Activated CD8-positive, alpha-beta T cell treated with anti-CD3 and anti-CD28 coated beads, Interleukin-2, amount 10 ng/mL, durations not matched to agents 7 days and 5 days (primary cell): ENCODE measurements at regions of chr14 and their contacts with region 1.

Region 1: DNA sequence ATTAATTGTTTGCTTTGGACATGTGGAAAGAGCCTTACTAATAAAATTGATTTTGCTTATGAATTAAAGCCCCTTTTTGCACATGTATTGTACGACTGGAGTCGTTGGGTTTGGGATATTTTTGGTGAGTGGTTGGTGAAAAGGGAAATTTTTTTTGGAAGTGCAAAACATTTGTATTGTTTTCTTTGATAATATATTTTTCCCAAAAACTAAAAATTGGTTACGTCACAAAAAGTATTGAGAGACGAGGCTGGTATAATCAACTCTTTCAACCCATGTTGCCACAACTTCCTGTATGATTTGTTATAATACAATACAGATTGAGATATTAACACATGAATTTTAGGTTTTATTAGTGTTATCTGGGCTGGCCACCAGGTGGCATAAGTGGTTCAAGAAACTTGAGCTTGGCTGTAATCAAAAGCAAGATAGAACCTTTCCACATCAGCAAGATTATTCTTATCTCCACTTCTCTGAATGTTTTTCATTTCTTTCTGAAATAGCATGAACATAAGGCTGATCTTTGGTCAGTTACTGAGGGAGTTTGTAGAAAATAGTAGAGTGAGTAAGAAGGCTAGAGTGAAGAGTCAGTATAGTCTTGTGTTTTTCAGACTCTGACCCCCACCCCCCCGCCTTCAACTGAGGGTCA is 8.7 kb downstream of the NGDN start:
- DNase-seq: peak; percentile 81
- ATAC-seq: peak; percentile 52
- H3K4me3 Mint-ChIP-seq: no peak overlapping the region
- H3K27ac Mint-ChIP-seq: no peak overlapping the region
- H3K4me1 Mint-ChIP-seq: no peaks in the 10 kb centered on the region
- H3K27me3 Mint-ChIP-seq: no peaks in the 10 kb centered on the region

Region 2: DNA sequence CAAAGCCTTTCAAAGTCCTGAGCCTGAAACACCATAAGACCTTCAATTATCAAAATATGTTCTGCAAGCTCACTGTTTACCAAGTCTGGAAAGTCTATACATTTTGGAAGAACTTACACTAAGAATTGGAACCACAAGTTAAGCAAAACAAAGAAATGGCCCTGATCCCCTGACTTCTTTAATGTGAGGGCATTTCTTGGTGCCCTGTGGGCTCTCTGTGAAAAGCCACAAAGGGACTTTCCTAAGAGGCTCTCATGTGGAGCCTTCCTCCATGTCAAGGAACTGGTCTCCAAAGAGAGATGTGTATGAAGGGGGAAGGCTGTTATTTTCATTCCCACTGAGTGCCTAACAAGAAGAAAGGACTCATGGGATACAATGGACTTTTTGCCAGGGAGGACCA is 56.6 kb before region 1 on chr14:
- CTCF ChIA-PET with region 1: no interaction called
- POLR2A ChIA-PET with region 1: no interaction called
- DNase-seq: peak; percentile 25
- ATAC-seq: peak; percentile 61
- H3K4me3 Mint-ChIP-seq: no peak overlapping the region
- H3K27ac Mint-ChIP-seq: no peak overlapping the region
- H3K4me1 Mint-ChIP-seq: peaks cover 18% of the 10 kb centered on the region
- H3K27me3 Mint-ChIP-seq: no peaks in the 10 kb centered on the region

Region 3: GRCh38 chr14:23539248-23540140 is 61.3 kb after region 1 on chr14:
- CTCF ChIA-PET with region 1: interaction called, 69 read pairs
- POLR2A ChIA-PET with region 1: no interaction called
- DNase-seq: peak; percentile 41
- ATAC-seq: peak; percentile 62
- H3K4me3 Mint-ChIP-seq: no peak overlapping the region
- H3K27ac Mint-ChIP-seq: no peak overlapping the region
- H3K4me1 Mint-ChIP-seq: no peaks in the 10 kb centered on the region
- H3K27me3 Mint-ChIP-seq: peaks cover 2% of the 10 kb centered on the region

Region 4: GRCh38 chr14:23567192-23568020 is 89.2 kb after region 1 on chr14 and contains the start of gene AP1G2:
- CTCF ChIA-PET with region 1: interaction called, 266 read pairs
- POLR2A ChIA-PET with region 1: interaction called, 7 read pairs
- DNase-seq: peak; percentile 92
- ATAC-seq: peak; percentile 97
- H3K4me3 Mint-ChIP-seq: peak within 1 kb of the TSS; percentile 100
- H3K27ac Mint-ChIP-seq: peak within 1 kb of the TSS; percentile 99
- H3K4me1 Mint-ChIP-seq: peaks cover 50% of the 10 kb centered on the region
- H3K27me3 Mint-ChIP-seq: peaks cover 5% of the 10 kb centered on the region
- total RNA-seq, gene AP1G2: 267 to 276 TPM